Endothelial cell of umbilical vein (primary cell): ENCODE measurements at regions of chr11 and their contacts with region 1.

Region 1: GRCh38 chr11:64878494-64879243 is at the start of gene EHD1:
- DNase-seq: peak; percentile 97
- H3K4me3 ChIP-seq: peak within 1 kb of the TSS; percentile 54 to 92 (median 74)
- H3K27ac ChIP-seq: peak within 1 kb of the TSS; percentile 71
- H3K4me1 ChIP-seq: peaks cover 22% of the 10 kb centered on the region
- H3K27me3 ChIP-seq: no peaks in the 10 kb centered on the region
- CTCF ChIP-seq: peak; percentile 42 to 74
- POLR2A ChIP-seq: peak; percentile 99
- total RNA-seq, gene EHD1: 98.0 and 109 TPM in 2 replicates

Region 2: DNA sequence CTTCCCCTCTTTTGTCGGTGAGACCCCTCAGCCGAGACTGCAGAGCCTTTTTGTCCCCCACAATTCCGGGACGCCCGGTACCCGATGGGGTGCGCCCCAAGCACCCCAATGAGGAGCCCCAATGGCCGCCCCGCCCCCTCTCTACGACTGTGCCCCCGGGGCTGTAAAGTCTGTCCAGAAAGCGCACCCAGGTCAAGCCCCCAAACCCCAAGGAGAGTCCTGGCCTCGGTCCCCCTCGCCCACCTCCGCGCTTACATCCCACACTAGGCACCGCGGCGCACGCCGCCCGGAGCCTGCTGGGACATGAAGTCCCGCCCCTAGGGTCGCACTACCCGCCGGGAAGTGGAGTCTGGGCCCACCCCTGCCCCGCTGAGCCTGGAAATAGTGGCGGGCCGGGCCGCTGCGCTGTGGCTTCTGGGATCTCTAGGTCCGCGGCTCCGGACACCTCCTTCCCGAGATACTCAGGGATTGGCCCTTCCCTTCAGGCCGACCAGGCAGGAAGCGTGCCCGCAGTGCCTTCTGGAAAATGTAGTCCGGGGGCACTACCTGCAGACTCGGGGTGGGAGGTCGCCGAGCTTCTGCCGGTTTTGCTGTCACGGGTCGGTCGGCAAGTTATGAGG is 68.3 kb before region 1 on chr11 and contains the start of gene MEN1:
- CTCF ChIA-PET with region 1: no interaction called
- POLR2A ChIA-PET with region 1: no interaction called
- dilution Hi-C with region 1: no loop called
- intact Hi-C with region 1: loop called (anchors 2 kb)
- DNase-seq: peak; percentile 97
- H3K4me3 ChIP-seq: peak within 1 kb of the TSS; percentile 62 to 84 (median 70)
- H3K27ac ChIP-seq: no peak within 1 kb of the TSS
- H3K4me1 ChIP-seq: peaks cover 8% of the 10 kb centered on the region
- H3K27me3 ChIP-seq: no peaks in the 10 kb centered on the region
- CTCF ChIP-seq: no peak
- POLR2A ChIP-seq: peak; percentile 87
- total RNA-seq, gene MEN1: 41.1 and 41.6 TPM in 2 replicates

Region 3: DNA sequence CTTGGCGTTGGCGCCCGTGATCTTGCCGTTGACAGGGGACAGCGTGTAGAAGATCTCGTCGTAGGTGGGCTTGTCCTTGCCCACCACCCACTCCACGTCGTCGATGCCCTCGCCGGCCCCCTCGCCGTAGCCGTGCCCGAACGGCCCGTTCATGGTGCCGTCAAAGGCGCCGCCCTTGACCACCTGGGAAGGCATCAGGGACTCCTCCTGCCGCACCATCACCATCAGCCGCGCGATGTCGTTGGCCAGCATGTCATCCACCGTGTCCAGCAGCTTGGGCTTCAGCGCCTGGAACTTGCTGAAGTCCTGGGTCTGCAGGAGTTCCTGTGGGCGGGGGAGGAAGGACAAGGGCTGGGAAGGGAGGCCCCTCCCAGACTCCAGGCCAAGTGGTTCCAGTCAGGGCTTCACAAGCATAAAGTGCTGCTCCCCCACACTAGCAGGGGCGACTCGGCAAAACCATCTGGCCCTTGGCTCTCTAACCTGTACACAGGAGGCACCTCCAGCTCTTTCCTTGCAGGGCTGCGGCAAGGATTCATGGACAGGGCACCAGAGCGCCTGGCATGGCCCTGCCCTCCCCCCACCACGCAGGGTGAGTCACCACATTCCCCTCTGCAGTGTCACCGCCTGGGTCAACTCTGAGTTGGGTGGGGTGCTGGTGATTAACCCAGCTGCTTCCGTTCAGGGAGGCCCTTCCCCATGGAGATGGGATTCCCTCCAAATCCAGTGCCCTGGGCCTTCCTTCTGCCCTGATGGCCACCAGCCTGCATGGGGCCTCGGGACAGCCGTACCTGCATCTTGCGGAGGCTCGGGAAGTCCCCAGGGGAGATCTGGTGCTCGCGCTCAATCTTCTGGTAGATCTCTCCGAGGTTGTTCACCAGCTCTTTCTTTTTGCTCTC is 23.9 kb before region 1 on chr11:
- CTCF ChIA-PET with region 1: interaction called, 77 read pairs
- POLR2A ChIA-PET with region 1: interaction called, 24 read pairs
- dilution Hi-C with region 1: no loop called
- intact Hi-C with region 1: loop called (anchors 1 kb)
- DNase-seq: peak; percentile 91
- H3K4me3 ChIP-seq: no peak overlapping the region
- H3K27ac ChIP-seq: peak overlapping the region; percentile 74
- H3K4me1 ChIP-seq: peaks cover 37% of the 10 kb centered on the region
- H3K27me3 ChIP-seq: no peaks in the 10 kb centered on the region
- CTCF ChIP-seq: no peak
- POLR2A ChIP-seq: peak; percentile 82

Region 4: DNA sequence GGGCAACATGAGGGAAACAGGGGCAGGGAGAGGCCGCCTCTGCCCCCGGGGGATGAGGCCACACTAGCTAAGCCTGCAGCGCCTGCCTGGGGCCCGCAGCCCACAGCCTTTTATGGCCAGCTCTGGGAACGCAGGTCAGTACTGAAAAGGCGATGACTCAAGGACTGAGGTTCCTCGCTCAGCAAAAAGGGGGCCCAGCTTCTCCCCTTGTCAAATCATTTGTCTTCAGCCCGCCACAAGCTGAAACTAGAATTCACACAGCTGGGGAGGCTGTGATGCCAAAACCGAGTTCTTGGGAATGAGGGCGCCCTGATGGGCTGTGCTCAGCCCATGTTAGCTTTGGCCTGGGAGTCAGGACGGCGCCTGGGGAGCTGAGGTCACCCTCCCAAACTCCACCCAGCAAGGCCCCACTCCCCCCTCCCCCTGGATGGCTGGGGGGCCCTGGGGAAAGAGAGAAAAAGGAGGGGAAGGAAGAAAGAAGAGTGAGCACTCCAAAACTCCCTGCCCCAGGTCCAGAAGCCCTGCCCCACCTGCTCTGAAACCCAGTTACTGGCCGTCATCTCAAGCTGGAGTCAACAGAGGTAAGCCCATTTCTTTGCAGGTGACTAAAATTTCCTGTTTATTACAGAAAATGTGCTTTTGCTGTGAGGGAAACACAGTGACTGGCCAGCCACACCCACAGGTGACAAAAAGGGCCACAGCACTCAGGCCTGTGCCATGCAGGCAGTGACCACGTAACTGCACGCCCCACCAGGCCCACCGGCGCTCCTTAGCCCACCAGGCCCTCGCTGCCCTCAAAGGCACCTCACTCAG is 14.0 kb before region 1 on chr11:
- CTCF ChIA-PET with region 1: interaction called, 34 read pairs
- POLR2A ChIA-PET with region 1: interaction called, 45 read pairs
- dilution Hi-C with region 1: no loop called
- intact Hi-C with region 1: loop called (anchors 1 kb)
- DNase-seq: peak; percentile 53
- H3K4me3 ChIP-seq: no peak overlapping the region
- H3K27ac ChIP-seq: peak overlapping the region; percentile 74
- H3K4me1 ChIP-seq: peaks cover 45% of the 10 kb centered on the region
- H3K27me3 ChIP-seq: no peaks in the 10 kb centered on the region
- CTCF ChIP-seq: no peak
- POLR2A ChIP-seq: no peak

Region 5: GRCh38 chr11:64916775-64917662 is 38.4 kb after region 1 on chr11 and contains the start of gene ATG2A:
- CTCF ChIA-PET with region 1: no interaction called
- POLR2A ChIA-PET with region 1: no interaction called
- dilution Hi-C with region 1: no loop called
- intact Hi-C with region 1: loop called (anchors 1 kb)
- DNase-seq: peak; percentile 100
- H3K4me3 ChIP-seq: peak within 1 kb of the TSS; percentile 10 to 86 (median 72)
- H3K27ac ChIP-seq: peak within 1 kb of the TSS; percentile 49
- H3K4me1 ChIP-seq: peaks cover 11% of the 10 kb centered on the region
- H3K27me3 ChIP-seq: no peaks in the 10 kb centered on the region
- CTCF ChIP-seq: no peak
- POLR2A ChIP-seq: peak; percentile 79
- total RNA-seq, gene ATG2A: 24.3 and 27.4 TPM in 2 replicates